ENCODE measurements at regions of chr7 and their contacts with region 1.

Region 1: GRCh38 chr7:120805636-120806388 is 52.1 kb downstream of the TSPAN12 start:
- DNase-seq: peak; percentile 81
- H3K4me3 Mint-ChIP-seq: no peak overlapping the region
- H3K27ac Mint-ChIP-seq: no peak overlapping the region
- H3K4me1 Mint-ChIP-seq: no peaks in the 10 kb centered on the region
- H3K27me3 Mint-ChIP-seq: peaks cover 22% of the 10 kb centered on the region
- CTCF ChIP-seq: peak; percentile 77

Region 2: GRCh38 chr7:120792091-120792860 is 13.5 kb before region 1 on chr7:
- CTCF ChIA-PET with region 1: interaction called, 112 read pairs
- POLR2A ChIA-PET with region 1: no interaction called
- intact Hi-C with region 1: no loop called
- DNase-seq: peak; percentile 76
- H3K4me3 Mint-ChIP-seq: no peak overlapping the region
- H3K27ac Mint-ChIP-seq: no peak overlapping the region
- H3K4me1 Mint-ChIP-seq: peaks cover 11% of the 10 kb centered on the region
- H3K27me3 Mint-ChIP-seq: peaks cover 27% of the 10 kb centered on the region
- CTCF ChIP-seq: peak; percentile 84

Region 3: DNA sequence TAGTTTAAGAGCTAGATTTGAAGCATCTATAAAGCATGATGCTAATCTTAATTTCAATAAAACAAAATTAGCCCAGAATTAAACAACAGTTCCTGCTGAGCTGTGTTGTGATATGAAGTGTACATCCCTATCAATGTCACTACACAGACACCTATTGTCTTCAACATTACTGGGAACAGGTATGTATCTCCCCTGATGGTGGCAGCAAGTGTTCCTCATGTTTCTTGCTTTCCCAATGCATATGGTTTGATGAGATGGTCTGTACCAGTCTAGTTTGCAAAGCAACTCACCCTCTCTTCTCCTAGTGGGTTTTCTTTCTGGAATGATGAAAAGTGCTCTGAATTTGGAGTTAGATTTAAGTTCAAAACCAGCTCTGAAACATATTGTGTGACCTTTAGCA is 14.1 kb after region 1 on chr7:
- CTCF ChIA-PET with region 1: interaction called, 16 read pairs
- POLR2A ChIA-PET with region 1: no interaction called
- intact Hi-C with region 1: no loop called
- DNase-seq: no peak
- H3K4me3 Mint-ChIP-seq: no peak overlapping the region
- H3K27ac Mint-ChIP-seq: no peak overlapping the region
- H3K4me1 Mint-ChIP-seq: no peaks in the 10 kb centered on the region
- H3K27me3 Mint-ChIP-seq: peaks cover 87% of the 10 kb centered on the region
- CTCF ChIP-seq: no peak

Region 4: GRCh38 chr7:120842121-120842621 is 36.4 kb after region 1 on chr7:
- CTCF ChIA-PET with region 1: interaction called, 15 read pairs
- POLR2A ChIA-PET with region 1: no interaction called
- intact Hi-C with region 1: no loop called
- DNase-seq: no peak
- H3K4me3 Mint-ChIP-seq: no peak overlapping the region
- H3K27ac Mint-ChIP-seq: no peak overlapping the region
- H3K4me1 Mint-ChIP-seq: no peaks in the 10 kb centered on the region
- H3K27me3 Mint-ChIP-seq: peaks cover 51% of the 10 kb centered on the region
- CTCF ChIP-seq: no peak

Region 5: DNA sequence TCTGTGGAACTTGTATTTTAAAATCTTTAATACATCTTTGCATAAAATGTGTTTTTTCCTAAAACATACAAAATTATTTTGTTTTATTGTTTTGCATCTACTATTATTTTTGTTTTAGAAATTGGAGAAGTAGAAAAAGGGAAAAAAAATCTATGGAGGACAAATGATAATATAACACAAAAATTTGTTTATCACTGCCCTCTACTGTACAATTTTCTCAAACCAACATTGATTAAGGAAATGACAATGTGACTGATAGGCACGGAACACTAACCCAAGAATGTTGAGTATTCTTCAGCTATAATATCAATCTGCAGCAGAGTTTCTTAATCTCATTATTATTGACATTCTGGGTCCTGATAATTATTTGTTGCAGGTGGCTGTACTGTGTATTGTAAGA is 135.3 kb after region 1 on chr7:
- CTCF ChIA-PET with region 1: interaction called, 11 read pairs
- POLR2A ChIA-PET with region 1: no interaction called
- intact Hi-C with region 1: loop called (anchors 1 kb)
- DNase-seq: peak; percentile 16
- H3K4me3 Mint-ChIP-seq: no peak overlapping the region
- H3K27ac Mint-ChIP-seq: no peak overlapping the region
- H3K4me1 Mint-ChIP-seq: no peaks in the 10 kb centered on the region
- H3K27me3 Mint-ChIP-seq: peaks cover 80% of the 10 kb centered on the region
- CTCF ChIP-seq: no peak

Region 6: DNA sequence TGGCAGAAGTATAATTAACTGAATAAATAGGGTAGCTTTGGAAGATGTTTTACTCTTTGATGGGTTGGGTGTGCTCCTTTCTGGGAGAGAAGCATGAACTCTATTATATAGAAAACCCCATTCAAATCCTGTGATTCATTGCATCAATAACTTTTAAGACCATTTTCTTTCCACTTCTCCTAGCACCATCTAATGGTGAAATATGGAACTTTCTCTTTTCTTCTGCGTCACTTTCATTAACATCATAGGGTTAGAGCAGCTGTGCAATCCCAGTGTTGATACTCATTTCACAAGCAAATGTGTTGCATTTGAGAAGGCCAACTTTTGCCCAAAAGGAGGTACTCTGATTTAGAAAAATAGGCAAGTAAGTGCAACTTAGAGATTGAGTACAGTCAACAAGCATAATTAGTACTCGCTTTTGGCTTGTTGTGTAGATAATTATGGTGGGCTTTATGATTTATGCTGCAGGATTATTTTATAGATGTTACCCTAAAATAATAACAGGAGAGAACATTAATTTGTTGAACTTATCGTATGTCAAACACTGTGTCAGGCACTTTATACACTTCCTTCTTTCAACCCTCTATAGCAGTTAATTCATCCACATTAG is 275.6 kb after region 1 on chr7:
- CTCF ChIA-PET with region 1: interaction called, 17 read pairs
- POLR2A ChIA-PET with region 1: interaction called, 3 read pairs
- intact Hi-C with region 1: no loop called
- DNase-seq: peak; percentile 71
- H3K4me3 Mint-ChIP-seq: no peak overlapping the region
- H3K27ac Mint-ChIP-seq: no peak overlapping the region
- H3K4me1 Mint-ChIP-seq: peaks cover 29% of the 10 kb centered on the region
- H3K27me3 Mint-ChIP-seq: no peaks in the 10 kb centered on the region
- CTCF ChIP-seq: peak; percentile 52

Region 7: GRCh38 chr7:121107923-121108498 is 302.2 kb after region 1 on chr7:
- CTCF ChIA-PET with region 1: interaction called, 7 read pairs
- POLR2A ChIA-PET with region 1: no interaction called
- intact Hi-C with region 1: loop called (anchors 2 kb)
- DNase-seq: peak; percentile 70
- H3K4me3 Mint-ChIP-seq: no peak overlapping the region
- H3K27ac Mint-ChIP-seq: no peak overlapping the region
- H3K4me1 Mint-ChIP-seq: no peaks in the 10 kb centered on the region
- H3K27me3 Mint-ChIP-seq: peaks cover 38% of the 10 kb centered on the region
- CTCF ChIP-seq: peak; percentile 57

Measured in MCF 10A (cell line).